ENCODE measurements at regions of chr7 and their contacts with region 1.

Region 1: GRCh38 chr7:24819916-24820689 is 62.8 kb upstream of the GSDME start:
- DNase-seq: peak; percentile 92
- H3K4me3 Mint-ChIP-seq: peak overlapping the region; percentile 31
- H3K27ac Mint-ChIP-seq: peak overlapping the region; percentile 88
- H3K4me1 Mint-ChIP-seq: peaks cover 55% of the 10 kb centered on the region
- H3K27me3 Mint-ChIP-seq: no peaks in the 10 kb centered on the region
- CTCF ChIP-seq: peak; percentile 96

Region 2: GRCh38 chr7:24576171-24577025 is 243.7 kb before region 1 on chr7:
- CTCF ChIA-PET with region 1: no interaction called
- intact Hi-C with region 1: no loop called
- DNase-seq: peak; percentile 56
- H3K4me3 Mint-ChIP-seq: peak overlapping the region; percentile 6
- H3K27ac Mint-ChIP-seq: no peak overlapping the region
- H3K4me1 Mint-ChIP-seq: peaks cover 50% of the 10 kb centered on the region
- H3K27me3 Mint-ChIP-seq: peaks cover 10% of the 10 kb centered on the region
- CTCF ChIP-seq: peak; percentile 85

Region 3: DNA sequence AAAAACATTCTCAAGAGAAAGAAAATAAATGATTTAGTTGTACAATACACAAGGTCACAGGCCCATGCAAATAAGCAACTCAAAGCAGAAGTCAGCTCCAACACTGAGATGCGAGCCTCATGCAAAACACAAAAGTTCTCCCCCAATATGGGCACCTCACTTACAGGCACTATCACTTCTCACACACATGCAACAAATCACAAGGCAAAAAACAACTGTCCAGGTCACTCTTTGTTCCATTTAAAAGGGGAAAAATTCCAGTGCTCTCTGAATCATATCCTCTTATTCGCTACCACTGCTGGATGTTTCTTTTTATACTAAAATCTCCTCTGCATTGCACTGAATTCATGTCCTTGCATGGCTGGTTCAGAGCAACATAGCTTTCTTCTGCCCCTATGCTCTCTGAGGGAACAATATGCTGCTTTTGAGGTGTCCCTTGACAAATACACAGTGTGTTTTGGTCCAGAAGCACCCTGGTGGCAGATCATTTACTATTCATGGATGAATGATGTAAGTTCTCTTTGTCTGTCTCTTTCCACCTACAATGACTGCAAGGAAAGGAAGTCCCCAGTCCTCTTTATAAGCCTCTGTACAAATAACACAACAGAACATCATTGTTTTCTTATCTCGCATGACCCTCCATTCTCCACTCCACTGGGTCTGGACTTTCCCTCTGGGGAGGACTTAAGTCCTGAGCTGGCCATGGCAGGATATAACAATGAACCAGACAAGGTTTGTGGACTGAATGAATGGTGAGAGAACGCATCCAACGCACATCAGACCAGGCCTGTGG is 22.5 kb after region 1 on chr7:
- CTCF ChIA-PET with region 1: interaction called, 21 read pairs
- intact Hi-C with region 1: loop called (anchors 2 kb)
- DNase-seq: peak; percentile 50
- H3K4me3 Mint-ChIP-seq: peak overlapping the region; percentile 9
- H3K27ac Mint-ChIP-seq: peak overlapping the region; percentile 88
- H3K4me1 Mint-ChIP-seq: peaks cover 42% of the 10 kb centered on the region
- H3K27me3 Mint-ChIP-seq: no peaks in the 10 kb centered on the region
- CTCF ChIP-seq: no peak

Region 4: DNA sequence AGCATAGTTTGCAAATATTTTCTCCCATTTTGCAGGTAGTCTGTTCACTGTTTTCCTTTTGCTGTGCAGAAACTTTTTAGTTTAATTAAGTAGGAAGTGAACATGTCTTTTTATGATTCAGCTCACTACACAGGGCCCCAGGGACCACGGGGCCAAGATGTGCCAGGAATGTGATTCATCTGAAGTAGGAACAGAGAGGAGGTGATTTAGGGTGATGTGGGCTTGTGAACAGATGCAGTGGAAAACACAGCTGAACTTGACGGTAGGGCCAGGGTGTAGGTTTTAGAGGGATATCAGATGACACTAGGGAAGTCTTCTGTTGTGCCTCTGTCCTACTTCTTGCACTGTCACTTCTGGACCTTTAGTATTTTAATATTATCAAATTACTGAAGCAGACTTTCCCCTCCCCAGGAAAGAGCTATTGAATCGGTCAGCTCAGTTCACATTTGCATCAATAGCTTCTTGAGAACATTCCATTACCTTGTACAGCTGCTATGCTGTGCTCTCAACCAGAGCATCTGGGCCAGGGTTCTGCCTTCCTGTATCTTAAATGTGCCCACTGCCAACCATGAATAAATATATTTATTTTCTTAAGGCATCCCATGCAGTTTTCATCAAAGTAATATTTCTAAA is 63.0 kb after region 1 on chr7:
- CTCF ChIA-PET with region 1: interaction called, 9 read pairs
- intact Hi-C with region 1: loop called (anchors 2 kb)
- DNase-seq: no peak
- H3K4me3 Mint-ChIP-seq: no peak overlapping the region
- H3K27ac Mint-ChIP-seq: peak overlapping the region; percentile 3
- H3K4me1 Mint-ChIP-seq: no peaks in the 10 kb centered on the region
- H3K27me3 Mint-ChIP-seq: no peaks in the 10 kb centered on the region
- CTCF ChIP-seq: no peak

Region 5: DNA sequence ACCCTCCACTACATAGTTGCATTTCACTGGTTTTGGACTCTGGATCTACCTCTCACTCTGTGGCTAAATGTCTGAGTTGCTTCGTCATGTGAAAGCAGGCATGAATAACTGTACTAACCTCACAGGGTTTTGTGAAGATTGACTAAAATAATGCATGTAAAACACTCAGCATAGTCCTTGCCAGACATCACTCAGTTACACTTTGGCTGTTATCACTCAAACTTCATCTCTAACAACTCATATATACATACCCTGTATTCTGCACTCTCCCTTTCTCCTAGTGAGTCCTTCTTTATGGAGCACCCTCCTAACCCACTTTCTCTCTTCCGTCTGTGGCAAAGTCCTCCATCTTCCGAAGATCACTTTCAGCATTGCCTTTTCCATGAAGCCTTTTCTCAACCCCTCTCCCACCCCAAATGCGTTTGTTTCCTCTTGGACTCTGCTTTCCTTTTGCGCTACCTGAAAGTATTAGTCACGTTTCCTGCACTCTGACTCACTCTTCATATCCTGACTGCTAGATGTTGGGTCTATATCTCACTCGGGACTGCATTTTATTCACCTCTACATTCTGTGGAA is 87.3 kb after region 1 on chr7:
- CTCF ChIA-PET with region 1: interaction called, 3 read pairs
- intact Hi-C with region 1: loop called (anchors 1 kb)
- DNase-seq: peak; percentile 69
- H3K4me3 Mint-ChIP-seq: no peak overlapping the region
- H3K27ac Mint-ChIP-seq: no peak overlapping the region
- H3K4me1 Mint-ChIP-seq: peaks cover 23% of the 10 kb centered on the region
- H3K27me3 Mint-ChIP-seq: no peaks in the 10 kb centered on the region
- CTCF ChIP-seq: no peak

Region 6: DNA sequence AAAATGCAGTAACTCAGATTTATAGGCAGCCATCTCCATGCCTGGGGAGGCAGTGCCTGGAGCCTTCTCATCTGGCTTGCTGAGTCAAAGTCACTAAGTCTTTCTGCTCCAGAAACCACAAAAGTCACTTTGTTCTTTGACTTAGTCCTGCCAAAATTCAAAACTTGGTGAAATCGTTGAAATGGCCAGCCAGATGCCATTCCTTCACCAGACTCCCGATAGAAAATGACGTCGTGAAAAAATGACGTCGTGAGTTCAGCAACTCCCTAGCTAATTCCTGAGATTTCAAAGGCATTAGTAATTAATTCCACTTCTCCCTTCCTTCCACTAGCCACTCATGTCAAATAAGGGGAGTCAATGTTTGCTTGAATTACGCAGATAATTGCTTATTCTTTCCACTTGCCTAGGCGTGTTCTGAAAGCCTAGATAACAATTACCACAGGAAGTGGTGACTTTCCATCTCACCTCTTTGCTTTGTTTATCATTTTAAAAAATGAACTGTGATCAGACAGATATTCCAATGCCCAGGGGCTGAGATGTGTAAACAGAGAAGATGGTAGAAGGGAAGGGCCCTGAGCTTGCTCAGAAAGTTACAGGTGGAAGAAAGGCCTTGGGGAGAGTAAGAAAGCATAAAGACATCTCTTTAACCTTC is 208.4 kb after region 1 on chr7:
- CTCF ChIA-PET with region 1: interaction called, 3 read pairs
- intact Hi-C with region 1: loop called (anchors 2 kb)
- DNase-seq: peak; percentile 68
- H3K4me3 Mint-ChIP-seq: peak overlapping the region; percentile 26
- H3K27ac Mint-ChIP-seq: peak overlapping the region; percentile 96
- H3K4me1 Mint-ChIP-seq: peaks cover 94% of the 10 kb centered on the region
- H3K27me3 Mint-ChIP-seq: no peaks in the 10 kb centered on the region
- CTCF ChIP-seq: no peak

Region 7: GRCh38 chr7:25103773-25104172 is 283.7 kb after region 1 on chr7:
- CTCF ChIA-PET with region 1: no interaction called
- intact Hi-C with region 1: no loop called
- DNase-seq: no peak
- H3K4me3 Mint-ChIP-seq: no peak overlapping the region
- H3K27ac Mint-ChIP-seq: no peak overlapping the region
- H3K4me1 Mint-ChIP-seq: no peaks in the 10 kb centered on the region
- H3K27me3 Mint-ChIP-seq: no peaks in the 10 kb centered on the region
- CTCF ChIP-seq: no peak

Measured in Calu3 (cell line).